ENCODE measurements at regions of chr5 and their contacts with region 1.

Region 1: DNA sequence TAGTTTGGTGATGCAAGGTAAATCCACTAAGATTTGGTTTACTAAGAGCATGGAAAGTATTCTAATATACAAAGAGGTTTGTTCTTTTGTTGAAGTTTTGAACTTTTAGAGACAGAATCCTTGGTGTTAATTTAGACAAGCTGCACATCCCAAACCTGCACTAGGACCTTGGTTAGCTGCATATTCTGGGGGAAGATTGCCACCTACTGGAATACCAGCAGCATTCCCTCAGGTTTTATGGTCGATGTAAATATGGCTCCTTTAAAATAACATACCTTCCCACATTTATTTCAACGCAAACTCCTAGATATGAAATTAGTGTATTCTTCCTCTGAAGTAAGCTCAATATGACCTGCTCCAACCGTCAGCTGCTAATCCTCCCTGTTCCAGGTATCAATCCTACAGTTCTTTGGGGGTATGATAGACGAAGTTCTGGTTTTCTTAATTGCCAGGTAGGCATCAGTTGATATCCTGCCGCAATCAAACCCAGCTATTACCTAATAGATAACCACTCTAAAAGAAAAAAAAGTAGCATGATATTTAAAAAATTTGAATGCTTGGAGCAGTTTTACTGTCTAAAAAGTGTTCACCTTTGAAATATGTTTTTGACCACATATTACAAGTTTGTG is 624.1 kb downstream of the ISL1 start:
- DNase-seq: peak; percentile 42 to 49
- H3K4me3 ChIP-seq: no peak overlapping the region
- H3K4me3 Mint-ChIP-seq: no peak overlapping the region
- H3K27ac Mint-ChIP-seq: no peak overlapping the region
- H3K4me1 ChIP-seq: no peaks in the 10 kb centered on the region
- H3K4me1 Mint-ChIP-seq: no peaks in the 10 kb centered on the region
- H3K27me3 ChIP-seq: no peaks in the 10 kb centered on the region
- H3K27me3 Mint-ChIP-seq: no peaks in the 10 kb centered on the region
- CTCF ChIP-seq: peak; percentile 67 to 81

Region 2: GRCh38 chr5:51468196-51468595 is 539.1 kb before region 1 on chr5:
- CTCF ChIA-PET with region 1: no interaction called
- POLR2A ChIA-PET with region 1: no interaction called
- intact Hi-C with region 1: loop called (anchors 1 kb)
- DNase-seq: peak in 1 of 2 experiments; percentile 7
- H3K4me3 ChIP-seq: no peak overlapping the region
- H3K4me3 Mint-ChIP-seq: no peak overlapping the region
- H3K27ac Mint-ChIP-seq: no peak overlapping the region
- H3K4me1 ChIP-seq: no peaks in the 10 kb centered on the region
- H3K4me1 Mint-ChIP-seq: no peaks in the 10 kb centered on the region
- H3K27me3 ChIP-seq: no peaks in the 10 kb centered on the region
- H3K27me3 Mint-ChIP-seq: peaks cover 2% of the 10 kb centered on the region
- CTCF ChIP-seq: no peak

Region 3: DNA sequence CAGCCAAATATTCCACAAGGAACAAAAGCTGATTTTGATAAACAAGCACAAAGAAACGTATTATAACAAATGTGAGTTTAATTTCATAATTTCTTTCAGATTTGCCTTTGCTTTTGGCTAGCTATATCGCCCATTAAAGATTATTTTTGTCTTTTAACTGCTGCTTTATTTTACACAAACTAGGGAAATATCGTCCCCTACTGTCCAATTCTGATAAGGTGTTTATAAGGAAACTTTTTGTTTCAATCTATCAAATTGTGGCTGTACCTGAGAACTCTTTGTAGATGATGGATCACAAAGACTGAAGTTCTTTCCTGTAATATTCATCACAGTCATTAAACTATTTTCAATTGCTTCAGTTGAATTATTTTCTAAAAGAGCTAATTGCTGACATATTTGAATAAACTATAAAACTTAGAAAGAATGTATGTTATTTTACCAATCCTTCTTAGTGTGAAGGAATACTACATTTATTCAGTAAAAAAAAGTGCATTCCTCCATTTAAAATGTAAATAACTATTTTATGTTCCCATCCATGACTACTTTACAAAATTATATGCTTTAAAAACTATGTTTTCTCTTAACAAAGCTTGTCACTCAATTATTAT is 349.1 kb after region 1 on chr5:
- CTCF ChIA-PET with region 1: no interaction called
- POLR2A ChIA-PET with region 1: no interaction called
- intact Hi-C with region 1: loop called (anchors 10 kb)
- DNase-seq: peak in 1 of 2 experiments; percentile 12
- H3K4me3 ChIP-seq: no peak overlapping the region
- H3K4me3 Mint-ChIP-seq: no peak overlapping the region
- H3K27ac Mint-ChIP-seq: no peak overlapping the region
- H3K4me1 ChIP-seq: no peaks in the 10 kb centered on the region
- H3K4me1 Mint-ChIP-seq: no peaks in the 10 kb centered on the region
- H3K27me3 ChIP-seq: no peaks in the 10 kb centered on the region
- H3K27me3 Mint-ChIP-seq: no peaks in the 10 kb centered on the region
- CTCF ChIP-seq: peak; percentile 64 to 78

Measured in Caco-2 (cell line).